Activated CD4-positive, alpha-beta T cell treated with anti-CD3 and anti-CD28 coated beads, Interleukin-2, amount 10 ng/mL, durations not matched to agents 24 days and 14 days (primary cell): ENCODE measurements at regions of chr1 and their contacts with region 1.

Region 1: GRCh38 chr1:59432531-59433439 is 135.9 kb downstream of the FGGY start:
- DNase-seq: peak; percentile 53
- H3K4me3 Mint-ChIP-seq: no peak overlapping the region
- H3K27ac Mint-ChIP-seq: peak overlapping the region; percentile 38
- H3K4me1 Mint-ChIP-seq: peaks cover 34% of the 10 kb centered on the region
- H3K27me3 Mint-ChIP-seq: no peaks in the 10 kb centered on the region

Region 2: GRCh38 chr1:58546520-58547308 is 886.1 kb before region 1 on chr1 and contains the start of gene OMA1:
- intact Hi-C with region 1: loop called (anchors 1 kb)
- DNase-seq: peak; percentile 99
- H3K4me3 Mint-ChIP-seq: peak within 1 kb of the TSS; percentile 90
- H3K27ac Mint-ChIP-seq: peak within 1 kb of the TSS; percentile 92
- H3K4me1 Mint-ChIP-seq: peaks cover 22% of the 10 kb centered on the region
- H3K27me3 Mint-ChIP-seq: peaks cover 12% of the 10 kb centered on the region
- total RNA-seq, gene OMA1: 10.6 and 13.8 TPM in 2 replicates

Region 3: GRCh38 chr1:59150577-59151391 is 282.0 kb before region 1 on chr1:
- intact Hi-C with region 1: loop called (anchors 10 kb)
- DNase-seq: peak; percentile 81
- H3K4me3 Mint-ChIP-seq: peak overlapping the region; percentile 35
- H3K27ac Mint-ChIP-seq: peak overlapping the region; percentile 51
- H3K4me1 Mint-ChIP-seq: peaks cover 33% of the 10 kb centered on the region
- H3K27me3 Mint-ChIP-seq: no peaks in the 10 kb centered on the region

Region 4: GRCh38 chr1:59332983-59333382 is 99.8 kb before region 1 on chr1:
- intact Hi-C with region 1: loop called (anchors 1 kb)
- DNase-seq: peak; percentile 76
- H3K4me3 Mint-ChIP-seq: peak overlapping the region; percentile 35
- H3K27ac Mint-ChIP-seq: peak overlapping the region; percentile 80
- H3K4me1 Mint-ChIP-seq: peaks cover 30% of the 10 kb centered on the region
- H3K27me3 Mint-ChIP-seq: no peaks in the 10 kb centered on the region

Region 5: GRCh38 chr1:59477286-59477685 is 44.5 kb after region 1 on chr1:
- intact Hi-C with region 1: loop called (anchors 1 kb)
- DNase-seq: peak; percentile 79
- H3K4me3 Mint-ChIP-seq: peak overlapping the region; percentile 32
- H3K27ac Mint-ChIP-seq: peak overlapping the region; percentile 75
- H3K4me1 Mint-ChIP-seq: peaks cover 19% of the 10 kb centered on the region
- H3K27me3 Mint-ChIP-seq: no peaks in the 10 kb centered on the region